Posterior cingulate gyrus (tissue), 11 donors: ENCODE measurements at regions of chr22 and their contacts with region 1.

Region 1: DNA sequence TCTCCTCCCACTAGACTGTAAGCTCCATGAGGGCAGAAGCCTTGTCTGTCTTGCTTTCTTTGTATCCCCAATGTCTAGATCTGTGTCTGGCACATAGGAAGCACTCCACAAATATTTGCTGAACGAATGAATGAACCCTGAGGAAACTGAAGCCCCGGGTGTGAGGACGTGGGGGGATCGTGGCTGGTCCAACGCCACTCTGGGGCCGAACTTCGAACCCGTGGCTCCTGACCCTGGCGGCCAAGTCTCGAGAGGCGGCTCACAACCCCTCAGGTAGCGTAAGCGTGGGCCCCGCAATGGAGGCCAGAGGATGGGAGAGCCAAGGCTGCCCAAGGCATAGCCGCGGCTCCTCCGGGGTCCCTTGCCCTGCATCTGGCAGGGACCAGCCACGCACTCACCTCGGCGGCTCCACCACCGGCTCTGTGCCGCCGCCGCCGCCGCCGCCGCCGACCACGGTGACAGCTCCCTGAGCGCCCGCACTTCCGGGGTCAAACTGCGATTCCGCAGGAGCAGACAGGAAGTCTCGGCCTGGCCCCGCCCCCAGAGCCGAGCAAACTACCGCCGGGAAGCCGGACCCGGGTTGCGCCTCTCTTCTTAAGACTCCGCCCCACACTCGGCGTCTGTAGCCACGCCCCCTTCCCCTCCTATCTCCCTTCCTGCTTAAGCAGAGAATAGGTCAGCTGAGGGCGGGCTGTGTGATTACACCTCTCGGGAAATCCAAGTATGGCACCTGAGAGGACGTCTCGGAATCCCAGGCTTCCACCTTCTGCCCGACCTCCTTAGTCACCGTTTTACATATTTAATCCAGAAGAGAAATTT is at the start of gene ASCC2:
- DNase-seq: peak; percentile 94 to 100 (median 98)

Region 2: GRCh38 chr22:29348956-29349355 is 489.0 kb before region 1 on chr22:
- intact Hi-C with region 1: no loop called
- DNase-seq: no peak

Region 3: DNA sequence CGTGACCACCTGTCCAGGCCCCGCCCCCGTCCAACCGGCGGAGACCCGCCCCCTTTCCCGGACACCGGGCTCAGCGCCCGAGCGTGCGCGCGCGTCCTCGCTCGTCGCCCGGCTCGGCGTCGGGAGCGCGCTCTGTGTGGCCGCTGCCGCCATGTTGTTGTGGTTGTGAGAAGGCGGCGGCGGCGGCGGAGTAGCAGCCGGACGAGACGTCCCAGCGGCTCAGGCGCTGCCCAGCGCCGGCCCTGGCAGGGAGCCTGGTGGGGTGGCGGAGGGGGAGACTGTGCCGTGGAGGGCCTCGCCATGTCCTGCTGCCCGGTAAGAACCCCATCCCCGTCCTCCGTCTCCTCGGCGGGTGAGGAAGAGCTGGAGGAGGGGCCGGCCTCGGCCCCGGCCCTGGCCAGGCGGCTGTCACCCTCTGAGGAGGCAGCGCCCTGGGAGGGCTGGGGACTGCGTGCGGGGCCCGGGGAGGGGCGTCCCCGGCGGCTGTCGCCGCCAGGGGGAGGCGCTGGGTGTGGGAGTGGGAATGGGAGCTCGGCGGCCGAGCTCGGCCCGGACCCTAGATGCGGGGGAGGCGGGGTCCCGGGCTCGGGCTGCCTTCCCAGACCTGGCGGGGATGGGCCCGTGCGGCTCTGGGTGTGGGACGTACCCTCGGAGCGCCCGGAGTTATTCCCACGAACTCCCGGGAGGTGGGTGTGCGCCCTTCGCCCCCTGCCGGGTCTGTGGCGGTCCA is 45.2 kb after region 1 on chr22 and contains the start of gene MTMR3:
- intact Hi-C with region 1: loop called (anchors 5 kb)
- DNase-seq: peak; percentile 85 to 99 (median 92)

Region 4: DNA sequence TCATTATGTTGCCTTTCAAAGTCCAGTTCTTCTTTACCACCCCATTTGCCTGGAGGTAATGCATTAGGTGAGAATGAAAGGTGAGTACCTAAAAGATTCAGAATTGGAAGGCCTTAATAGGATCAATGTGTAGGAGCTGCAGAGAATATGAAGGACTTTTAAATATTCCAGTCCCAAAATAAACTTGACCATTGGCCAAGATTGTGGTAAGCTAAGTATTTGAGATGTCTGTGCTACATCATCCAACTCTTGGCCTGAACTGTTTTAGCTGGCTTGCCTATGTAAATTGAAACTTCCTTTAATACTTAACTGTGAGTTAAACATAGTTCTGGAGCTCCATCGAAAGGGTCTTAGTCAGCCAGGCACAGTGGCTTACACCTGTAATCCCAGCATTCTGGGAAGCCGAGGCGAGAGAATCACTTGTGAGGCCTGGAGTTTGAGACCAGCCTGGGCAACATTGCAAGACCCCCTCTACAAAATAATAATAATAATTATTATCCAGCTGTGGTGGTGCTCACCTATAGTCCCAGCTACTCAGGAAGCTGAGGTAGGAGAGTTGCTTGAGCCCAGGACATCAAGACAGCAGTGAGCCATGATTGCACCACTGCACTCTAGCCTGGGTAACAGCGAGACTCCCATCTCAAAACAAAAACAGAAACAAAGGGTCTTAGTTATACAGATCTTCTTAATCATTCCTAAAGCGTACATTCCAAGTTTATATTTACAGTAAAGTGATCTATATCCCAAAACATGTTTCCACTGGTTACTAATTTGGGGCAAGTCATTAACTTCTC is 74.8 kb after region 1 on chr22:
- intact Hi-C with region 1: no loop called
- DNase-seq: no peak